ENCODE measurements at regions of chr12 and their contacts with region 1.

Region 1: GRCh38 chr12:60421741-60422140 is 825.9 kb downstream of the SLC16A7 start:
- DNase-seq: no peak
- H3K4me3 ChIP-seq: no peak overlapping the region
- H3K27ac ChIP-seq: no peak overlapping the region
- H3K4me1 ChIP-seq: no peaks in the 10 kb centered on the region
- H3K27me3 ChIP-seq: no peaks in the 10 kb centered on the region
- CTCF ChIP-seq: no peak

Region 2: GRCh38 chr12:59716043-59716442 is 705.7 kb before region 1 on chr12:
- CTCF ChIA-PET with region 1: no interaction called
- POLR2A ChIA-PET with region 1: no interaction called
- intact Hi-C with region 1: no loop called
- DNase-seq: peak; percentile 52
- H3K4me3 ChIP-seq: no peak overlapping the region
- H3K27ac ChIP-seq: peak overlapping the region; percentile 45
- H3K4me1 ChIP-seq: no peaks in the 10 kb centered on the region
- H3K27me3 ChIP-seq: no peaks in the 10 kb centered on the region
- CTCF ChIP-seq: no peak

Region 3: GRCh38 chr12:59972941-59973340 is 448.8 kb before region 1 on chr12:
- CTCF ChIA-PET with region 1: no interaction called
- POLR2A ChIA-PET with region 1: no interaction called
- intact Hi-C with region 1: no loop called
- DNase-seq: peak; percentile 9
- H3K4me3 ChIP-seq: no peak overlapping the region
- H3K27ac ChIP-seq: no peak overlapping the region
- H3K4me1 ChIP-seq: no peaks in the 10 kb centered on the region
- H3K27me3 ChIP-seq: no peaks in the 10 kb centered on the region
- CTCF ChIP-seq: no peak

Region 4: DNA sequence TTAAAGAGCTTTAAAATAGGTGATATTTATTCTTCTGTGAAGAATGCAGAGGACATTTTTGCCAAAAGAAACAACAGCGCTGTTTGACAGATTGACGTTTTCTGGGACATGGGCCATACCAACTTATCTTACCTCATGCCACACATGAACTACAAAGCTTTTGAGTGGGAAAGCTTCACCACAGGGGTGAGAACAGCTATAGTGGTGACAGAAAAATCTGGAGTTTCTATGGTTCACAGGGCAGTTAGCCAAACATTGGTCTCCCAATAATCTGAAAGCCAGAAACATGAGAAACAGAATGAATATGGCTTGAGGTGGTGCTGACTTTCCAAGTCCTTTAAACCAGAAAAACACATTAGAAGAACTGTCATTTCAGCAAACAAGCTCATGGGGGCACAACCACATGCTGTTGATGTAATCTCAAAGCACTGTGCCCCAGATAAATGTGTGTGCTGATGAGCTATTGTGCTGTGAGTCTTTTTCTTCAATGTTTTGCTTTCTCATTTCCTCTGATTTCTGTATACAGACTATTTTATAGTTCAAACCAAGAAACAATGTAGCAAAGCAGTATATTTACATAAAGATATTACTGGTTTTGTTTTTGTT is 79.5 kb after region 1 on chr12:
- CTCF ChIA-PET with region 1: interaction called, 11 read pairs
- POLR2A ChIA-PET with region 1: no interaction called
- intact Hi-C with region 1: no loop called
- DNase-seq: peak; percentile 7
- H3K4me3 ChIP-seq: no peak overlapping the region
- H3K27ac ChIP-seq: no peak overlapping the region
- H3K4me1 ChIP-seq: no peaks in the 10 kb centered on the region
- H3K27me3 ChIP-seq: no peaks in the 10 kb centered on the region
- CTCF ChIP-seq: no peak; the same call in 1 of the 2 replicates

Measured in A673 (cell line).